ENCODE measurements at regions of chr10 and their contacts with region 1.

Region 1: GRCh38 chr10:98846789-98847188 is 388.9 kb downstream of the HPSE2 start:
- DNase-seq: no peak
- H3K4me3 ChIP-seq: no peak overlapping the region
- H3K27ac ChIP-seq: no peak overlapping the region
- H3K4me1 ChIP-seq: no peaks in the 10 kb centered on the region
- H3K27me3 ChIP-seq: no peaks in the 10 kb centered on the region
- CTCF ChIP-seq: no peak
- EP300 ChIP-seq: no peak
- POLR2A ChIP-seq: no peak
- RAD21 ChIP-seq: no peak

Region 2: DNA sequence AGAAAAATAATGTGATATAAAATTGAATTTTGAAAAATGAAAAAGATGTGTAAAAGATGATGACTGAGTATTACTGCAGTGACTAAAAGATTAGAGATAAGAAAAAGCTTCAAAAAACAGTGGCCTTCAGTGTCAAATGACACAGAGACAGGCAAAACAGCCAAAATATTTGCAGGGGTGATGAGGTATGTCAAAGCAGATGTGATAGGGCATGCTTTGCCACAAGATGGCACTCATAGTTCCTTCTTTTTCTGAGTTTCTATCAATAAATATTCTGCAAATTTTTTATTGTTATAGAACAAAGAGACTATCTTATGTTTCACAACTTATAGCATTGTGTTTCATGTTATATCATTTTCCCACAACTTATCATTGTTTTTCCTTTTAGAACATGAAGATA is 56.0 kb before region 1 on chr10:
- CTCF ChIA-PET with region 1: no interaction called
- POLR2A ChIA-PET with region 1: no interaction called
- DNase-seq: no peak
- H3K4me3 ChIP-seq: no peak overlapping the region
- H3K27ac ChIP-seq: no peak overlapping the region
- H3K4me1 ChIP-seq: no peaks in the 10 kb centered on the region
- H3K27me3 ChIP-seq: no peaks in the 10 kb centered on the region
- CTCF ChIP-seq: peak in 2 of 3 experiments; percentile 38 to 54; a peak in 2 of 4 replicates
- EP300 ChIP-seq: no peak
- POLR2A ChIP-seq: no peak
- RAD21 ChIP-seq: peak; percentile 68 to 69

Region 3: DNA sequence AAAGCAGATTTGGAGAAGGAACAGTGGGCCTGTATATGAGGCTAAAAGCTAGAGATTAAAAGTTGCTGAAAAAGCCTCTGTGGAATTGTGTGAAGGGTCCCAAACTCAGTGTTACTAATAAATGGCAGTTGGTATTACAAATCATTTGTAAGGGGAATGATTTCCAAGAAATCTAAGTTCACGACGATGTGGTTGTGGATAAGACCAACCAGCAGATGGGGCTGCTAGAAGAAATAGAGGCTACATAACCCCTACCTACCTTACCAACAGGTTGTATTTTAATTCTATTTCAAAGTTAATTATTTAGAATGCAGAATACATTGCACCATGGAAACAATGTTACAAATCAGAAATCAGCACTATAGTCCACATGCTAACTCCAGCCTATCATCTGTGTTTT is 11.7 kb after region 1 on chr10:
- CTCF ChIA-PET with region 1: interaction called, 12 read pairs
- POLR2A ChIA-PET with region 1: no interaction called
- DNase-seq: no peak
- H3K4me3 ChIP-seq: no peak overlapping the region
- H3K27ac ChIP-seq: no peak overlapping the region
- H3K4me1 ChIP-seq: no peaks in the 10 kb centered on the region
- H3K27me3 ChIP-seq: no peaks in the 10 kb centered on the region
- CTCF ChIP-seq: peak in 2 of 3 experiments; percentile 31 to 46; a peak in 2 of 4 replicates
- EP300 ChIP-seq: no peak
- POLR2A ChIP-seq: no peak
- RAD21 ChIP-seq: peak; percentile 44 to 48

Measured in H1 (cell line).